T-cell (primary cell): ENCODE measurements at regions of chr14 and their contacts with region 1.

Region 1: DNA sequence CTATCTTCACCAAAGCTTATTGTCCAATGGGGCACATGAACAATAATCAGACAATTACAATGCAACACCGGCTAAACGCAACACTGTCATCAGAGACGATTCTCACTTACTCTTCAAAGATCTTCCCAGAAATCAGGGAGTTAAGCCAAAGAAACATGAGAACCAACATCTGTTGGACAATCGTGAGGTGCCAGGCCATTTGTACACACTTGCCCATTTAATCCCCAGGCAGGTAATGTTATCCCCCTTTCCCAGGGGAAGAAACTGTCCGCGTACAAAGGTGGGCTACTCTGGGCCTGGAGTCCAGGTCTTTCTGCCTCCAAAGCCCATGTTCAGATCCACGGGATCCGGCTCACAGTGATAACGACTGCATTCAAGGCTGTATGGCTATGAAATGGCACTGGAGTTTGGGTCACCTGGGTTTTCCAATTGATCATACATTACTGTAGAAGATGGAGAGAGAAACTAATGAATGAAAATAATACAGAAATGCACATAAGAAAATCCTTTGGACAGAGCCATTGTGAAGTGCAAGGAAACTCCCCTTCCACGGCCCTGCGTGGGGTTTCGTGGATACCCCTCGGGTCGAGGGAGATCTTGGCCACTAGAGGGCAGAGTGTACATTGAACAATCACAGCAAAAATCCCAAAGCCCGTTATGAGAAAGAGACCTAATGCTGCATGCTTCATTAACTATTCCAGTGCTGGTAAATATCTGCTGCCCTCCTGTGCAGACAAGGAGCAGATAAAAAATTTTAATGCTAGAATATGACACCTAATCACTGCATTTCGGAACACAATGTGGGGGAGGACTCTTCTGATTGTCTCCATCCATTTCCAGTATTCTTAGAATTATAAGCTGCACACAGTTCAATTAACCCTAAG is 111.4 kb downstream of the EGLN3 start:
- DNase-seq: peak in 29 of 35 experiments; percentile 2 to 70 (median 29)
- ATAC-seq: peak; percentile 39 to 67 (median 52)
- H3K4me3 ChIP-seq: no peak overlapping the region
- H3K4me3 Mint-ChIP-seq: no peak overlapping the region
- H3K27ac ChIP-seq: no peak overlapping the region
- H3K27ac Mint-ChIP-seq: no peak overlapping the region
- H3K4me1 ChIP-seq: no peaks in the 10 kb centered on the region
- H3K4me1 Mint-ChIP-seq: peaks cover 6 to 8% (median 7%) of the 10 kb centered on the region in 3 donors
- H3K27me3 ChIP-seq: peaks cover 0 to 5% of the 10 kb centered on the region in 2 experiments
- H3K27me3 Mint-ChIP-seq: no peaks in the 10 kb centered on the region

Region 2: DNA sequence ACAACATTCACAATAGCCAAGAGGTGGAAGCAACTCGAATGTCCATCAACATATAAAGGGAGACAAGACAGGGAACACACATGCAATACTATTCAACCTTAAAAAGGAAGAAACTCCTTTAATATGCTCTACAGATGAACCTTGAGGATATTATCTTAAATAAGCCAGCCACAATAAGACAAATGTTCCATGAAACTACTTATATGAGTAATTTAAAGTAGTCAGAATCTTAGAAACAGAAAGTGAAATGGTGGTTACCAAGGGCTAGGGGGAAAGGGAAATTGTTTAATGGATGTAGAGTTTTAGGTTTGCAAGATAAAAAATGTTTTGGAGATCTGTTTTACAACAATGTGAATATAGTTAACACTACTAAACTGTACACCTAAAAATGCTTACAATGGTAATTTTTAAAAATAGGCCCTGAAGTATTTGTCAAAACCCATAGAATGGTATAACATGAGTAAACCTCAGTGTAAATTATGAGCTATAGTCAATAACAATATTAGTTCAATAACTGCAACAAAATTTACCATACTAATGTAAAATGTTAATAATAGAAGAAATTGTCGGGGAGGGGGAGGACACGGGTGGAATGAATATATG is 40.4 kb after region 1 on chr14:
- CTCF ChIA-PET with region 1: no interaction called
- POLR2A ChIA-PET with region 1: no interaction called
- DNase-seq: no peak
- ATAC-seq: no peak
- H3K4me3 ChIP-seq: no peak overlapping the region
- H3K4me3 Mint-ChIP-seq: no peak overlapping the region
- H3K27ac ChIP-seq: no peak overlapping the region
- H3K27ac Mint-ChIP-seq: no peak overlapping the region
- H3K4me1 ChIP-seq: no peaks in the 10 kb centered on the region
- H3K4me1 Mint-ChIP-seq: no peaks in the 10 kb centered on the region
- H3K27me3 ChIP-seq: no peaks in the 10 kb centered on the region
- H3K27me3 Mint-ChIP-seq: no peaks in the 10 kb centered on the region

Region 3: DNA sequence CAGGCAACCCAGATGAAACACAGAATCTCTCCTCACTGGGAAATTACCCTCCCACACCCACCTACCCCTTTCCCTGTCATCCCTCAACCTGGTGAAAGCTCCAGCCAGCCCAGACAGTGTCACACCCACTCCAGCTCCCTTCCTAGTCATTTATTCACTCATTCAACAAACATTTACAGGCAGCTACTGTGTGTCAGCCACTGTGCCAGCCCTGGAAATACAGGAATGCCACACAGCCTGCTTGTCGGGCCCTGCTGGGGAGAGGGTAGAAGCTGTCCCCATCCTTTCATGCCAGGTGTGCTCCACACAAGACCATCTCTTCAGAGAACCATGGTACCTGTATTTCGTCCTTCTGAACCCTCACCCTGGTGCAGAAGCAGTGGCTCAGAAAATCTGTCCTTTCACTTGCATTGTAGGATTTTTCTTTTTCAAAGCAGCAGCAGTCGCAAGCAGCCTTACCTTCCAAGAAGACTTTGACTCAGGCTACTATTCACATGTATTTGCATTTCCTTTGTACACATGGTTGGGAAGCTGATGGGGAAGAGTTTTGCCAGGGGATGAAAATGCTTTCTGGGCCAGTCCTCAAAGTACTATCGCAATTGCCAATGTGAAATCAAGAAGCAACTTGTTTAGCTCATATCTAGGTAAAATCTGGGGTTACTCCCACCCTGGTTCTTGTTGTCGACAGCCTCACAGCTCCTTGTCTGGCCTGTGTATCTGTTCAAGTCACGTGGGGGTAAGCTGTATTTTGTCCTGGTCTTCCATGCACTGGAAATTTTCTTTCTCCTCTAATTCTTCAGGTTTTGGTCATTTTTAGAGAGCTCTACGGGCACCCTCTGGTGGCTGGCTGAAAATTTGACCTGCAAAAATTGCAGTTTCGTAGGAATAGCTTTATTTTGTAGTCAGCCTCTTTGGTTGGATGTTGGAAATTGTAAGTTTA is 258.9 kb after region 1 on chr14:
- CTCF ChIA-PET with region 1: interaction called, 8 to 11 read pairs
- POLR2A ChIA-PET with region 1: no interaction called
- DNase-seq: peak in 5 of 35 experiments; percentile 1 to 25 (median 7)
- ATAC-seq: no peak
- H3K4me3 ChIP-seq: no peak overlapping the region
- H3K4me3 Mint-ChIP-seq: no peak overlapping the region
- H3K27ac ChIP-seq: no peak overlapping the region
- H3K27ac Mint-ChIP-seq: no peak overlapping the region
- H3K4me1 ChIP-seq: peaks cover 0 to 2% of the 10 kb centered on the region in 2 experiments
- H3K4me1 Mint-ChIP-seq: peaks cover 12 to 20% (median 14%) of the 10 kb centered on the region in 3 donors
- H3K27me3 ChIP-seq: no peaks in the 10 kb centered on the region
- H3K27me3 Mint-ChIP-seq: no peaks in the 10 kb centered on the region

Region 4: GRCh38 chr14:34227834-34228649 is 388.6 kb after region 1 on chr14:
- CTCF ChIA-PET with region 1: interaction called, 5 to 11 read pairs
- POLR2A ChIA-PET with region 1: no interaction called
- DNase-seq: peak in 31 of 35 experiments; percentile 0 to 63 (median 20)
- ATAC-seq: peak; percentile 55 to 74 (median 60)
- H3K4me3 ChIP-seq: no peak overlapping the region
- H3K4me3 Mint-ChIP-seq: peak overlapping the region in 2 of 3 donors; percentile 28 to 42
- H3K27ac ChIP-seq: no peak overlapping the region
- H3K27ac Mint-ChIP-seq: no peak overlapping the region
- H3K4me1 ChIP-seq: no peaks in the 10 kb centered on the region
- H3K4me1 Mint-ChIP-seq: peaks cover 5 to 7% (median 5%) of the 10 kb centered on the region in 3 donors
- H3K27me3 ChIP-seq: no peaks in the 10 kb centered on the region
- H3K27me3 Mint-ChIP-seq: peaks cover 5 to 6% of the 10 kb centered on the region in 2 donors